ENCODE measurements at regions of chr7 and their contacts with region 1.

Region 1: GRCh38 chr7:150368096-150368883 is at the start of gene REPIN1:
- DNase-seq: peak; percentile 88
- ATAC-seq: peak; percentile 65
- H3K4me3 Mint-ChIP-seq: peak within 1 kb of the TSS; percentile 93
- H3K27ac Mint-ChIP-seq: peak within 1 kb of the TSS; percentile 90
- H3K4me1 Mint-ChIP-seq: peaks cover 36% of the 10 kb centered on the region
- H3K27me3 Mint-ChIP-seq: no peaks in the 10 kb centered on the region
- total RNA-seq, gene REPIN1: 53.4 to 57.5 TPM

Region 2: DNA sequence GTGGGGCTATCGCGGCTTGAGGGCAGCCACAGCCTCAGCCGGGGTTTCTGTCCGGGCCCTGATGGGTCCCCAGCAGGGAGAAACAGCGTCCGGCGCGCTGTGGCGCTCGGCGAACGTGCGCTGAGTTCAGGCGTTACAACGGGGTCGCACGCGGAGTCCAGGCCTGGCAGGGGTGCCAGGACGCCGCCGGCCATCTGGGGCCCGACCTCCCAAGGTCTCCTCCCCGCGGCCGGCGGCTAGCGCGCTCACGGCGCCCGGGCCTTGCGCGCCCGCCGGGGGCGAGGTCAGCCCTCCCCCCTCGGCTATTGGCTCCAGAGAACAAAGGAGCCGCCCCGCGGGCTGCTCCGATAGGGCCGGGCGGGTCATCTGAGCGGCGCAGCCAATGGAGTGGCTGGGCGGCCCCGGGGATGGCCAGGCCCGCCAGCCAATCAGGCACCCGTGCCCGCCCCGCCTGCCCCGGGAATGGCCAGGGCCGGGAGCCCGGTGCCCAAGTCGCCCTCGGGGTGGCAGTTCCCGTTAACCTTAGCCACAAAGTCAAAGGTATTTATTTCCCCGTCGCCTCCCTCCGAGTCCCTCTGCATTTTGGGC is 10.7 kb after region 1 on chr7 and contains the start of gene ZNF775:
- POLR2A ChIA-PET with region 1: interaction called, 14 read pairs
- DNase-seq: peak; percentile 94
- ATAC-seq: peak; percentile 99
- H3K4me3 Mint-ChIP-seq: peak within 1 kb of the TSS; percentile 99
- H3K27ac Mint-ChIP-seq: peak within 1 kb of the TSS; percentile 78
- H3K4me1 Mint-ChIP-seq: peaks cover 39% of the 10 kb centered on the region
- H3K27me3 Mint-ChIP-seq: no peaks in the 10 kb centered on the region
- total RNA-seq, gene ZNF775: 5.4 to 6.4 TPM

Region 3: DNA sequence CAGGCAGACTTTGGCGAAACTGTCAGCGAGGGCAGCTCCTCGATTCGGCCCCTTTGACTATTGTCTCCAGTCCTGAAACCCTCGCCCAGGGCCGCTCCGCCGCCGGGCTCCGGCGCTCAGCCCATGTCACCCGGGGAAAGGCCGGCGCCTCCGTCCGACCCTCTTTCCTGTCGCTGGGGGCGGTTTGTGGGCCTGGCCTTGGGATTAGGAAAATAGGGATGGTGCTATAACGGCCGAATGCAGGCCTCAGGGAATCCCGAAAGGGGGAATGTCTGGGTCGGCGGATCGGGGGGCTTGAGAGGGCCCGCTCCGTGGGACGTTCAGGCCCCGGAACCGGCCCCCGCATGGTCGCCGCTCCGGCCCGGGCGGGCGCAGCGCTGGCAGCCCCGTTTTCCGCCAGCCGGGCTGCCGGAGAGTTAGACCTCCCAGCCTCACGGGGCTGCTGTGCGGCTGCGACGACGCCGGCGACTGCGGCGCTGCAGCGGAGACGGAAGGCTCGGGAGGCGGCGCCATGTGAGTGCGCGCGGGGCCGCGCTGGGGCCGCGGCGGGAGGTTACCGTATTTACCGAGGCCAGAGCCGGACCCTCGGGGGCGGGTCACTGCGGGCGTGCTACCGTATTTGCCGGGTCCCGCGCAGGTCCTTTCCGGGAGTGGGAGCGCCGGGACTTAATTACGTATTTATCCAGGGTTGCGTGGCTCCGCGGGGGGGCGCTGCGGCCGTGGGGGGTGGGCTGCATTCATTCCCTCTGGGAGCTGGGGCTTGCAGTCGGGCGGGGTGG is 36.7 kb after region 1 on chr7:
- POLR2A ChIA-PET with region 1: interaction called, 47 read pairs
- DNase-seq: peak; percentile 87
- ATAC-seq: peak; percentile 77
- H3K4me3 Mint-ChIP-seq: peak overlapping the region; percentile 98
- H3K27ac Mint-ChIP-seq: peak overlapping the region; percentile 98
- H3K4me1 Mint-ChIP-seq: peaks cover 28% of the 10 kb centered on the region
- H3K27me3 Mint-ChIP-seq: no peaks in the 10 kb centered on the region

Measured in activated naive CD8-positive, alpha-beta T cell treated with anti-CD3 and anti-CD28 coated beads, Interleukin-2, amount 10 ng/mL, durations not matched to agents 7 days and 5 days (primary cell).